Posterior vena cava (tissue), 2 donors: ENCODE measurements at regions of chr6 and their contacts with region 1.

Region 1: DNA sequence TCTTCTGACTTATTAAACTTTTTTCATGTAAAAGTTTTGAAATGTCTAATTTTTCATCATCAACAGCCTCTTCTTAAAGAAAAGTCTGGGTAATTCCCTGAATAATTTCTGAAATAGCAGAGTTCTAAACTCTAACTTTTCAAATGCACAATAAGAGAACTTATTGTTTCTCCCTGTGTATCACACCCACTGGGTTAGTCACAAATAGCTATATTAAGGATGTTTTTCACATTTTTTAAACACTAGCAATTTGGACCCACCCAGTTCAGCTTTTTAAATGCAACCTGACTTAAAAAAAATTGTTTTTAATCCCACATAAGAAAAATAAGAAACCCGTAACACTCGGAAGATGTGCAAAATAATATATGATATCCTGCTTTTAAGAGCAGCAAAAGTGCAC is 61.4 kb upstream of the UTRN start:
- DNase-seq: no peak

Region 2: DNA sequence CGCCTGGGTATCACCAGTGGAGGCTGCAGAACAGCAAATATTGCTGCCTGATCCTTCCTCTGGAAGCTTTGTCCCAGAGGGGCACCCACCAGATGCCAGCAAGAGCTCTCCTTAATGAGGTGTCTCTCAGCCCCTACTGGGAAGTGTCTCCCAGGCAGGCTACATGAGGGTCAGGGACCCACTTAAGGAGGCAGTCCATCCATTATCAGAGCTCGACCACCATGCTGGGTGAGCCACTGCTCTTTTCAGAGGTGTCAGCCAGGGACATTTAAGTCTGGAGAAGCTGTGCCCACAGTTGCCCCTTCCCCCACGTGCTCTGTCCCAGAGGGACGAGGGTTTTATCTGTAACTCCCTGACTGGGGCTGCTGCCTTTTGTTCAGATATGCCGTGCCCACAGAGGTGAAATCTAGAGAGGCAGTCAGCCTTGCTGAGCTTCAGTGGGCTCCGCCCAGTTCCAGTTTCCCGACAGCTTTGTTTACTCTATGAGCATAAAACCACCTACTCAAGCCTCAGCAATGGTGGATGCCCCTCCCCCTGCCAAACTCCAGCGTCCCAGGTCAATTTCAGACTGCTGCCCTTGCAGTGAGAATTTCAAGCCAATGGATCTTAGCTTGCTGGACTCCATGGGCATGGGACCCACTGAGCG is 1188.9 kb before region 1 on chr6:
- intact Hi-C with region 1: no loop called
- DNase-seq: no peak

Region 3: GRCh38 chr6:143901885-143902750 is 321.6 kb before region 1 on chr6:
- intact Hi-C with region 1: no loop called
- DNase-seq: no peak

Region 4: GRCh38 chr6:144265390-144265789 is 41.7 kb after region 1 on chr6:
- intact Hi-C with region 1: loop called in 1 of 2 experiments (anchors 2 kb)
- DNase-seq: no peak

Region 5: GRCh38 chr6:144689503-144690075 is 465.9 kb after region 1 on chr6:
- intact Hi-C with region 1: no loop called
- DNase-seq: peak; percentile 25